Panc1 (cell line): ENCODE measurements at regions of chr16 and their contacts with region 1.

Region 1: DNA sequence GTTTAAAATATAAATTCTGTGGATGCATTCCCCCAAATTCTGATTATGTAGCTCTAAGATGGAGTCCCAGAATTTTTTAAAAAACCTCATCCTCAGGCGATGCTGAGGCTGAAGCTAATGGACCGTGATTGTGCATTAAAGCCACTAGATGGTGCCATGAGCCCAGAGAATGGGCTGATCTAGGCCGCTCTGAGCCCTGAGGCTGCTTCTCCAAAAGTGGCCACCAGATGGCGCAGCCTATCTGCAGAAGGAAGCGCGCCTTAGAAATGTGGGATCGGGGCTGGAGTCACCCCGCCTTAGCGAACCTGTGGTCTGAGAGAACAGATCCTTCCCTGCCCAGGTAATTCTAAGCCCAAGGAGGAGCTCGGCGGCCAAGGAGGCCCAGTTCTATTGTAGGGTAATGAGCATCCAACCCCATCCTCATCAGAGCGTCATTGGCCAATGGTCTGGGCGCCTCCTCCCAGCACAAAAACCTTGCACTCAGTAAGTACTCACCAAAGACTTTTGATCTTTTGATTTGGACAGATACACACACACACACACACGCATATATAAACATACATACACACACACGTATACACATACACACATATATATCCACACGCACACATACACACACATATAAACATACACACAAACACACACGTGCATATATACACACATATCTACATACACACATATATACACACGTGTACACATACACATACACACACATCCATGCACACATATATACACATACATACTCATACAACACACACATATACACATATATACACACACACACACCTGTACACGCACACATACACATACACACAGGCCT is 13.7 kb upstream of the MMP2 start:
- DNase-seq: peak; percentile 71
- ATAC-seq: peak; percentile 93
- H3K4me3 ChIP-seq: peak overlapping the region in 1 of 2 experiments; percentile 43; a peak in 2 of 4 replicates
- H3K27ac ChIP-seq: no peak overlapping the region
- H3K4me1 ChIP-seq: peaks cover 20% of the 10 kb centered on the region
- H3K27me3 ChIP-seq: no peaks in the 10 kb centered on the region
- CTCF ChIP-seq: peak; percentile 94

Region 2: GRCh38 chr16:55502801-55503366 is 37.6 kb after region 1 on chr16:
- CTCF ChIA-PET with region 1: interaction called, 11 read pairs
- POLR2A ChIA-PET with region 1: no interaction called
- in situ Hi-C with region 1: no loop called
- intact Hi-C with region 1: loop called (anchors 5 kb)
- DNase-seq: no peak
- ATAC-seq: peak; percentile 86
- H3K4me3 ChIP-seq: no peak overlapping the region
- H3K27ac ChIP-seq: peak overlapping the region; percentile 86
- H3K4me1 ChIP-seq: peaks cover 63% of the 10 kb centered on the region
- H3K27me3 ChIP-seq: no peaks in the 10 kb centered on the region
- CTCF ChIP-seq: no peak

Region 3: GRCh38 chr16:55508941-55509931 is 43.9 kb after region 1 on chr16 and contains the start of gene LPCAT2:
- CTCF ChIA-PET with region 1: interaction called, 11 read pairs
- POLR2A ChIA-PET with region 1: interaction called, 4 read pairs
- in situ Hi-C with region 1: no loop called
- intact Hi-C with region 1: loop called (anchors 5 kb)
- DNase-seq: no peak
- ATAC-seq: peak; percentile 96
- H3K4me3 ChIP-seq: peak within 1 kb of the TSS; percentile 81 to 82
- H3K27ac ChIP-seq: peak within 1 kb of the TSS; percentile 77
- H3K4me1 ChIP-seq: peaks cover 10% of the 10 kb centered on the region
- H3K27me3 ChIP-seq: no peaks in the 10 kb centered on the region
- CTCF ChIP-seq: no peak
- total RNA-seq, gene LPCAT2: 62.1 TPM

Region 4: GRCh38 chr16:55543472-55543871 is 78.2 kb after region 1 on chr16:
- CTCF ChIA-PET with region 1: no interaction called
- POLR2A ChIA-PET with region 1: no interaction called
- in situ Hi-C with region 1: no loop called
- intact Hi-C with region 1: loop called (anchors 2 kb)
- DNase-seq: no peak
- ATAC-seq: no peak
- H3K4me3 ChIP-seq: no peak overlapping the region
- H3K27ac ChIP-seq: no peak overlapping the region
- H3K4me1 ChIP-seq: peaks cover 3% of the 10 kb centered on the region; the same call in 1 of the 2 replicates
- H3K27me3 ChIP-seq: no peaks in the 10 kb centered on the region
- CTCF ChIP-seq: peak; percentile 29; the same call in 1 of the 2 replicates

Region 5: GRCh38 chr16:55701442-55702319 is 236.4 kb after region 1 on chr16:
- CTCF ChIA-PET with region 1: interaction called, 10 read pairs
- POLR2A ChIA-PET with region 1: no interaction called
- in situ Hi-C with region 1: no loop called
- intact Hi-C with region 1: loop called (anchors 1 kb)
- DNase-seq: no peak
- ATAC-seq: peak; percentile 71
- H3K4me3 ChIP-seq: no peak overlapping the region
- H3K27ac ChIP-seq: no peak overlapping the region
- H3K4me1 ChIP-seq: no peaks in the 10 kb centered on the region; the same call in 1 of the 2 replicates
- H3K27me3 ChIP-seq: no peaks in the 10 kb centered on the region
- CTCF ChIP-seq: peak; percentile 70

Region 6: GRCh38 chr16:55735120-55735781 is 270.0 kb after region 1 on chr16:
- CTCF ChIA-PET with region 1: no interaction called
- POLR2A ChIA-PET with region 1: no interaction called
- in situ Hi-C with region 1: no loop called
- intact Hi-C with region 1: no loop called
- DNase-seq: no peak
- ATAC-seq: no peak
- H3K4me3 ChIP-seq: no peak overlapping the region
- H3K27ac ChIP-seq: no peak overlapping the region
- H3K4me1 ChIP-seq: no peaks in the 10 kb centered on the region
- H3K27me3 ChIP-seq: no peaks in the 10 kb centered on the region
- CTCF ChIP-seq: no peak